Esophagus muscularis mucosa (tissue), 4 donors: ENCODE measurements at regions of chr3 and their contacts with region 1.

Region 1: GRCh38 chr3:125062888-125063618 is 7.3 kb upstream of the HEG1 start:
- DNase-seq: no peak
- H3K4me3 ChIP-seq: no peak overlapping the region
- H3K27ac ChIP-seq: peak overlapping the region; percentile 82 to 84 (median 84)
- H3K4me1 ChIP-seq: peaks cover 44 to 49% (median 46%) of the 10 kb centered on the region in 4 donors
- H3K27me3 ChIP-seq: no peaks in the 10 kb centered on the region
- CTCF ChIP-seq: no peak
- EP300 ChIP-seq: no peak
- POLR2A ChIP-seq: no peak

Region 2: GRCh38 chr3:125141596-125142419 is 78.8 kb after region 1 on chr3:
- intact Hi-C with region 1: loop called (anchors 5 kb)
- DNase-seq: no peak
- H3K4me3 ChIP-seq: peak overlapping the region; percentile 54 to 58 (median 56)
- H3K27ac ChIP-seq: peak overlapping the region; percentile 47 to 72 (median 63)
- H3K4me1 ChIP-seq: peaks cover 45 to 57% (median 55%) of the 10 kb centered on the region in 4 donors
- H3K27me3 ChIP-seq: no peaks in the 10 kb centered on the region
- CTCF ChIP-seq: peak; percentile 58 to 70 (median 68)
- EP300 ChIP-seq: no peak
- POLR2A ChIP-seq: no peak

Region 3: GRCh38 chr3:125322166-125322565 is 259.1 kb after region 1 on chr3:
- intact Hi-C with region 1: no loop called
- DNase-seq: no peak
- H3K4me3 ChIP-seq: no peak overlapping the region
- H3K27ac ChIP-seq: no peak overlapping the region
- H3K4me1 ChIP-seq: peaks cover 0 to 17% (median 4%) of the 10 kb centered on the region in 4 donors
- H3K27me3 ChIP-seq: no peaks in the 10 kb centered on the region
- CTCF ChIP-seq: no peak
- EP300 ChIP-seq: no peak
- POLR2A ChIP-seq: no peak

Region 4: GRCh38 chr3:125398954-125399353 is 335.9 kb after region 1 on chr3:
- intact Hi-C with region 1: no loop called
- DNase-seq: no peak
- H3K4me3 ChIP-seq: no peak overlapping the region
- H3K27ac ChIP-seq: no peak overlapping the region
- H3K4me1 ChIP-seq: no peaks in the 10 kb centered on the region
- H3K27me3 ChIP-seq: no peaks in the 10 kb centered on the region
- CTCF ChIP-seq: no peak
- EP300 ChIP-seq: no peak
- POLR2A ChIP-seq: no peak